ENCODE measurements at regions of chr9 and their contacts with region 1.

Region 1: GRCh38 chr9:36407122-36407723 is 7.2 kb upstream of the RNF38 start:
- DNase-seq: no peak

Region 2: GRCh38 chr9:36190388-36191287 is 216.6 kb before region 1 on chr9 and contains the start of gene CLTA:
- intact Hi-C with region 1: no loop called
- DNase-seq: peak; percentile 98
- total RNA-seq, gene CLTA: 58.3 TPM

Region 3: DNA sequence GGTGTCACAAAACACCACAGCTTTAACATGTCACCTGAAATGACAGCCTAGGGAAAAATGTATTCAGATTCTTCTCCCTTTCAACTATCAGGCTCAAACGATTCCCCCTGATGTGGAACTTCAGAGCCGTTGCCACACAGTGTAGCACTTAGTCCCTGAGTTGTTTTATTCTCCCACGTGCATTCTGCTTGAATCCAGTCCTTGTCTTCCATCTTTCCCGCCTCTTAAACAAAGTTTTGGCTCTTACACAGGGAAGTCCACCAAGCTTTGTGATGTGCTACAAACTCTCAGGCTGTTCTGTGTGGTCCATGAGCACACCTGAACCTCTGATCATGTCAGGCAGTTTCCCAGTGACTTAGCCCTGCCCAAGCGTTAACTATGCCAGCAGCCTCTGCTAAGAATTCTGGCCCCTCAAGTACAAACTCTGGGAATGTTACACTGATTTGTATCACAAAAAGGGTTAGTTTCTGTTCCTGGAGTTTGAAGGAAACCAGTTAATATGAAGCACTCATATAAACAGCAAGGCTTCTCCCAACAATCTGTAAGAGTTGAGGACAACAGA is 38.7 kb after region 1 on chr9:
- intact Hi-C with region 1: loop called (anchors 5 kb)
- DNase-seq: no peak

Region 4: GRCh38 chr9:36560857-36561221 is 153.6 kb after region 1 on chr9:
- intact Hi-C with region 1: loop called (anchors 1 kb)
- DNase-seq: no peak

Measured in cardiac septum (tissue), 1 donor.